Posterior vena cava (tissue), 2 donors: ENCODE measurements at regions of chr2 and their contacts with region 1.

Region 1: GRCh38 chr2:99325363-99325762 is 10.8 kb downstream of the TXNDC9 start:
- DNase-seq: no peak

Region 2: DNA sequence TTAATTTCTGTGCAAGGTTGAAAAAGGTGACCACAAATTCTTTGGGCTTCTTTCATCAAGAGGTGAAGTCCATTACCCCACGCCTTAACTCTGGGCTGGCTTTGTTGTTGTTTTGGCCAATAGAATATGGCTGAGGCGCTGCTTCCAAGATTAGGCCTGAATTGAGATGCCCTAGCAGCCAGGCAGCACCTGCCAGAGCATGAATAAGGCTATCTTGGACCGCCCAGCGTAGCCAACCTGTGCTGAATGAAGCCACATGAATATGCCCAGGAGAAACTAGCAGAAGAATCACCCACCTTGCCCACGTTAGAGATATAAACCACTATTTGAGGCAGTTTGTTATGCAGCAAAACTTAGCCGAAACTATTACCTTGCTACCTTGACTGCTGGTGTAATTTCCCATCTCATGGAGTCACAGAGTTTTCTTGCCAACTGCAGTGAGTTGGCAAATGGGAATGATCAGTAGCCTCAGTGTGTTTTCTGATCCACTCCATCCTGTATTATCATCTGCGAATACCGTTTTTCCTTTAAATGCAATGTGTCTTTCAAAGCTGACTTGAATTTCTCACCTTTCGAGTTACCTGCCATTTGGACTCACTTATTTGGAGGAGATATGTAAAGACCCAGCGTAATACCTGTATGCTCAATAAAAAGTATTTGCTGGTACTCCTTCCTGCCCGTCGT is 171.3 kb before region 1 on chr2:
- intact Hi-C with region 1: loop called in 1 of 2 experiments (anchors 2 kb)
- DNase-seq: no peak

Region 3: GRCh38 chr2:99380376-99381010 is 55.1 kb after region 1 on chr2:
- intact Hi-C with region 1: no loop called
- DNase-seq: no peak